ENCODE measurements at regions of chr15 and their contacts with region 1.

Region 1: GRCh38 chr15:69502470-69503045 is 49.9 kb downstream of the RPLP1 start:
- DNase-seq: no peak
- ATAC-seq: no peak
- H3K4me3 Mint-ChIP-seq: no peak overlapping the region
- H3K27ac Mint-ChIP-seq: no peak overlapping the region
- H3K4me1 Mint-ChIP-seq: peaks cover 4% of the 10 kb centered on the region
- H3K27me3 Mint-ChIP-seq: peaks cover 2% of the 10 kb centered on the region
- CTCF ChIP-seq: no peak

Region 2: GRCh38 chr15:69475769-69476358 is 26.7 kb before region 1 on chr15:
- CTCF ChIA-PET with region 1: interaction called, 19 read pairs
- POLR2A ChIA-PET with region 1: no interaction called
- intact Hi-C with region 1: no loop called
- DNase-seq: peak; percentile 81
- ATAC-seq: peak; percentile 89
- H3K4me3 Mint-ChIP-seq: no peak overlapping the region
- H3K27ac Mint-ChIP-seq: no peak overlapping the region
- H3K4me1 Mint-ChIP-seq: peaks cover 2% of the 10 kb centered on the region
- H3K27me3 Mint-ChIP-seq: peaks cover 9% of the 10 kb centered on the region
- CTCF ChIP-seq: peak; percentile 95

Measured in activated CD8-positive, alpha-beta T cell treated with anti-CD3 and anti-CD28 coated beads for 36 hours (primary cell).